Activated T-helper 2 cell treated with anti-CD3 and anti-CD28 coated beads, Interferon-gamma antibody, Interleukin-2, Interleukin-4, amounts not matched to agents 10 μg/mL and 5 μg/mL and 100 μg/mL, durations not matched to agents 14 hours and 24 hours and 36 hours (primary cell): ENCODE measurements at regions of chr17 and their contacts with region 1.

Region 1: DNA sequence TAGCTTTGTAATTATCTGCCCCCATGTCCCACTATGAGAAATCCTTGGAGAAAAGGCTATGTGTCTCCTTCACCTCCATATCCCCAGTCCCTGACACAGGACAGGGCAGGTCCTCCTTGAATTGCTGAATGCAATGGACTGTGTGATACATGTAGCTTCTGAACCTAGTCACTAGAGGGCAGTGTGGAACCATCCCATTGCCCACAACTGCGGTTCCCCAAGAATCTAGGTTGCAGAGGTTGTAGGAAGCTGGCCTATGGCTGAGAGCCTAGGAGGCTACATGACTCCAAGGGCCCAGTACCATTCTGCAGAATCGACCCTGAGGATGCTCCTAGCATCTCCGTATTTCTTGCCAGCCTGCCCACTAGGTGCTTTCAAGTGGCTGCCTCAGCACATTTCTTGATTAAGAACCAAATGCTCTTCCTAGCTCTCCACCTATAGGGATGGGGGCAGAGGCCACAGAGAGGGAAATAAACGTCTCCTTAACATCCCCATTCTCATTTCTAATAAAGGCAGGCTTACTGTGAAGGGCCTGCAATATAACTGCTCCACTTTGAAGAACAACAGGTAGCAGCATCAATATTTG is 394.0 kb downstream of the CA10 start:
- DNase-seq: peak; percentile 36
- H3K4me3 Mint-ChIP-seq: no peak overlapping the region
- H3K27ac Mint-ChIP-seq: no peak overlapping the region
- H3K4me1 Mint-ChIP-seq: peaks cover 12% of the 10 kb centered on the region
- H3K27me3 Mint-ChIP-seq: peaks cover 2% of the 10 kb centered on the region

Region 2: GRCh38 chr17:51820252-51820651 is 55.8 kb after region 1 on chr17:
- intact Hi-C with region 1: loop called (anchors 10 kb)
- DNase-seq: no peak
- H3K4me3 Mint-ChIP-seq: no peak overlapping the region
- H3K27ac Mint-ChIP-seq: peak overlapping the region; percentile 90
- H3K4me1 Mint-ChIP-seq: peaks cover 19% of the 10 kb centered on the region
- H3K27me3 Mint-ChIP-seq: no peaks in the 10 kb centered on the region

Region 3: DNA sequence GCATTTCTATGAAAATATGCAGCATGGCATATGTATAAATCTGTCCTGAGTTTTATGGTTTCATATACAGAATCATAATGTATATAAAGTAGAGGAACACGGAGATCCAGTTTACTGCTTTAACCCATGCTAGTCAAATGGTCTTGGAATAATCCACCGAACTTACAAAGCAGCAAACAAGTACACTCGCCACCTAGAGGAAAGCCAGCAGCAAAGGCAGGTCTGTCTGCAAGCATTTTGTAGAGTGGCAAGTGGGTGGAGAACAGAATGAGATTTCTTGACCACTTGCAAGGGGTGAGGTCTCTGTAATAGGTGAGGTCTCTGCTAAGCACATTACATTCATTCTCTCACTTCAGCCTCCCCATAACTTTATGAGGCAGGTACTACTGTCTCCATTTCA is 85.7 kb after region 1 on chr17:
- intact Hi-C with region 1: loop called (anchors 10 kb)
- DNase-seq: no peak
- H3K4me3 Mint-ChIP-seq: no peak overlapping the region
- H3K27ac Mint-ChIP-seq: no peak overlapping the region
- H3K4me1 Mint-ChIP-seq: no peaks in the 10 kb centered on the region
- H3K27me3 Mint-ChIP-seq: peaks cover 4% of the 10 kb centered on the region

Region 4: DNA sequence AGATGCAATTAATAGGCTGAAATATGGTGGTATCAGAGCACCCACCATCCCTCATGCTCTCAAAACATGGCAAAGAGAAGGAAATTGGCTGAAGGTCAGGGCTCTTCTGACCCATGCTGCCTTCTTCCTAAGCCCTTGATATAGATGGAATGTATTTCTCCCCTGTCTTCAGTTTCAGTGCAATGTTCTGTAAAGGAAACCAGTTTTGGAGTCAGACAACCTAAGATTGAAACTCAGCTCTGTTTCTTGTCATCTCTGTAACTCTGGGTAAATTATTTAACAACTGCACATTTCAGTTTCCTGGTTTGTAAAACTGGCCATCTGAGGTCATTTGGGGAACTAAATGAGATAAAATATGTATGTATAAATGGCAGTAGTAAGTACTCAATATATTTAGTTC is 150.1 kb after region 1 on chr17:
- intact Hi-C with region 1: loop called (anchors 10 kb)
- DNase-seq: no peak
- H3K4me3 Mint-ChIP-seq: no peak overlapping the region
- H3K27ac Mint-ChIP-seq: no peak overlapping the region
- H3K4me1 Mint-ChIP-seq: no peaks in the 10 kb centered on the region
- H3K27me3 Mint-ChIP-seq: no peaks in the 10 kb centered on the region

Region 5: GRCh38 chr17:52106638-52107261 is 342.3 kb after region 1 on chr17:
- intact Hi-C with region 1: loop called (anchors 1 kb)
- DNase-seq: no peak
- H3K4me3 Mint-ChIP-seq: no peak overlapping the region
- H3K27ac Mint-ChIP-seq: no peak overlapping the region
- H3K4me1 Mint-ChIP-seq: no peaks in the 10 kb centered on the region
- H3K27me3 Mint-ChIP-seq: no peaks in the 10 kb centered on the region